ENCODE measurements at regions of chr21 and their contacts with region 1.

Region 1: DNA sequence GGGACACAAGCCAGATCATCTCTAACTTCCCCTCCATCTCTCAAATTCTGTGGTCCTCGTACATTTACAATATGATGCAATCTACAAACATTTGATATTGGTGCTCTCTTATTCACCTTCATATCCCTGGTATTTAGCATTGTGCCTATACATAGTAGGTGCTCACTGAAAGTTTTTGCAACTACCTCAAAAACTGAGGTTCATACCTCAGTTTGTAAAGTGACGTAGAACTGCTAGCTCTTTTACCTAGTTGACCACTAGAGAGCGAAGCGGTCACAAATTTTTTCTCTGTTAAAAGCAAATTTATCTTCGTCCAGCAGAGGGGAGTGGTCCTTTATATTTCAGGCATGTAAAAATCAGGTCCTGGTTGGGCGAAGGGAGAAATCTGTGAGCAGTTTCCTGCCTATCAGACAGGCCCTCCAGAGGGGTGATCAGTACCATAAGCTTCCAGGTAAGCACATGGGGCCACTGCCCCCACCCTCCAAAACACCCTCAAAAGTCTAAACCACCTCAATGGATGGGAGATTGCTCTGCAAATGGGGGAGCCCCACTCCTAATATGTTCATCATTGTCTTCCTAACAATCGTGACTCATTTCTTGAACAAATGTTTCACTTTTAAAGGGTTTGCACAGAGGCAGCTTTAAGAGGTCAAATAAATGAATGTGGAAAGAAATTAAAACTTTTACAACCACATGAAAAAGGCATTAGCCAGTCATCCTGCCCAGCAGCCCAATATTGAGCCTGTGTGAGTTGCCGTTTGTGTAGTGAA is 10.6 kb upstream of the HLCS start:
- DNase-seq: peak; percentile 74
- ATAC-seq: peak; percentile 81
- H3K4me3 ChIP-seq: no peak overlapping the region
- H3K27ac ChIP-seq: peak overlapping the region; percentile 21; the same call in 1 of the 2 replicates
- H3K4me1 ChIP-seq: peaks cover 7 to 19% of the 10 kb centered on the region in 2 experiments
- H3K27me3 ChIP-seq: no peaks in the 10 kb centered on the region
- CTCF ChIP-seq: peak; percentile 77 to 99 (median 91)
- POLR2A ChIP-seq: no peak
- RAD21 ChIP-seq: peak; percentile 86

Region 2: DNA sequence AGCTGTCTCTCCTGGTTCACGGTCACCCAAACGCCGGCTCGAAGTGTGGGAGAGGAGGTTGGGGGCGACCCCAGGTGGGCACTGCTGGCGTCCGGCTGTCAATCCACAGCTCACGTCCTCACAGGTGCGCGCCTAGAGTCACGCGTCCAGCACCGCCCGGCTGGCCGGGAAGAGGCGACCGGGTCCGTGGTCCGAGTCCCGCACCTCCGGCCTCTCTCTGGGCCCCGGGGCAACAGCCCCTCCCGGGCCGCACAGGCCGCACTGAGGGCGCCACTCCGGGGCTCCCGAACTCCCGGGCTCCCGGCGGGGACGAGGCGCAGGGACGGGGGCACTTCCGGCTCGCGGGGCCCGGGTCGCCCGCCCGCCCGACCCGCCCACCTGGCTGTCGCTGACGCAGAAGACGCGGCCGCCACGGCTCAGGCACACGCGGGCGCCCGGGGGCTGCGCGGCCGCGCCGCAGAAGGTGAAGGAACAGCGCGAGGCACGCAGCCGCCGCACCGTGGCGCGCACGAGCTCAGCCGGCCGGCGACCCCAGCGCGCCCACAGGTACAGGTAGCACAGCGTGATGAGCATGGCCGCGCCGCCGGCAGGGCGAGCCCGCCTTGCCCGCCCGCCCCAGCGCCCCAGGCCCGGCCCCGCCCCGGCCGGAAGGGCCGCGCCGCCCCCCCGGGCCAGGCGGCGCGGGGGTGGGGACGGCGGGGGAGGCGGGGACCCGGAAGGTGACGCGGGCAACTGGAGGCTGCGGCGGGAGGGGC is 10.8 kb before region 1 on chr21 and contains the start of gene HLCS:
- CTCF ChIA-PET with region 1: interaction called, 21 read pairs
- POLR2A ChIA-PET with region 1: interaction called, 7 read pairs
- RAD21 ChIA-PET with region 1: no interaction called
- intact Hi-C with region 1: no loop called
- DNase-seq: no peak
- ATAC-seq: peak; percentile 87
- H3K4me3 ChIP-seq: peak within 1 kb of the TSS; percentile 81 to 82
- H3K27ac ChIP-seq: peak within 1 kb of the TSS; percentile 90
- H3K4me1 ChIP-seq: peaks cover 11 to 18% of the 10 kb centered on the region in 2 experiments
- H3K27me3 ChIP-seq: no peaks in the 10 kb centered on the region
- CTCF ChIP-seq: peak in 1 of 3 experiments; percentile 5; a peak in 1 of 6 replicates
- POLR2A ChIP-seq: peak; percentile 49
- RAD21 ChIP-seq: no peak
- total RNA-seq, gene HLCS: 18.5 TPM

Region 3: DNA sequence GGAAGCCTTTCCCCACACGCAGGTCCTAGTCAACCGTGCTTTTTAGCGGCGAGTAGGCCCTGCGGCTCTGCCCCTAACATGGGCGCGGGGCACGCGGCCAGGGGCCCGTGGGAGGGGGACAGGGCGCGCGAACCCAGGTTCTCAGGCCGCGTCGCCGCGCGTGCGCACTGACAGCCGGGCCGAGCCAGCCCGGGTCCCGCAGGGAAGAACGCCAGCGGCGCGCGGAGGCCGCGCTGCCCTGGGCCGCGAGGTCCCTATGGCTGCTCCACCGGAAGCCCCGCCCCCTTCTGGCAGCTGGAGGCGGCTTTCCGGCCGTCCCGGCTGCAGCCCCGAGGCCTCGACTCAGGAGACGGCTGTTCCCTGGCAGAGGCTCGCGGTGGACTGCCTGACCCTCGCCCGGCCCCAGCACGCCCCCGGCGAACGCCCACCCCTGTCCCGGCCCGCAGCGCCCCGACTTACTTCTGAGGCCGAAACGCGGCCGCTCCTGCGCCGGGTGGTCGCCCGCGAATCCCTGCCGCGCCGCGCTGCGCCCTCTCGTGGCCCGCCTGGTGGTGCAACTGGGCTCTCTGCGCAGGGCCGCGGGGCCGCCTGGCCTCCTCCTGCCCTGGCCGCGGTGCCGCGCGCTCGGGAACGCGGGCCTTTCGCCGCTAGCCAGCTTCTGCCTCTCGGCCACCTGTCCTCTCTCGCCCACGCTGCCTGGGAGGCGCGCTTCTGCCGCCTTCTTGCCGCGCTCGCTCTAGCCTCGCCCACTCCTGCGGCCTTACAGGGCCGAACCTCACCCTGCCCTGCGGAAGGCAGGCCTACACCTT is 12.8 kb after region 1 on chr21:
- CTCF ChIA-PET with region 1: interaction called, 15 read pairs
- POLR2A ChIA-PET with region 1: interaction called, 7 read pairs
- RAD21 ChIA-PET with region 1: interaction called in 1 of 2 experiments, 4 read pairs
- intact Hi-C with region 1: no loop called
- DNase-seq: peak; percentile 81
- ATAC-seq: peak; percentile 94
- H3K4me3 ChIP-seq: peak overlapping the region; percentile 46 to 57
- H3K27ac ChIP-seq: peak overlapping the region; percentile 83
- H3K4me1 ChIP-seq: peaks cover 11 to 25% of the 10 kb centered on the region in 2 experiments
- H3K27me3 ChIP-seq: no peaks in the 10 kb centered on the region
- CTCF ChIP-seq: peak in 2 of 3 experiments; percentile 44 to 69; a peak in 4 of 6 replicates
- POLR2A ChIP-seq: peak; percentile 30
- RAD21 ChIP-seq: no peak

Region 4: GRCh38 chr21:37009740-37010341 is 32.8 kb after region 1 on chr21:
- CTCF ChIA-PET with region 1: interaction called, 13 read pairs
- POLR2A ChIA-PET with region 1: no interaction called
- RAD21 ChIA-PET with region 1: interaction called, 3 to 4 read pairs
- intact Hi-C with region 1: no loop called
- DNase-seq: peak; percentile 81
- ATAC-seq: peak; percentile 99
- H3K4me3 ChIP-seq: peak overlapping the region; percentile 38 to 63
- H3K27ac ChIP-seq: no peak overlapping the region
- H3K4me1 ChIP-seq: peaks cover 4 to 12% of the 10 kb centered on the region in 2 experiments; a peak in 3 of 4 replicates
- H3K27me3 ChIP-seq: no peaks in the 10 kb centered on the region
- CTCF ChIP-seq: peak; percentile 83 to 87 (median 85)
- POLR2A ChIP-seq: no peak
- RAD21 ChIP-seq: peak; percentile 68

Region 5: GRCh38 chr21:37087188-37087587 is 110.1 kb after region 1 on chr21:
- CTCF ChIA-PET with region 1: interaction called, 10 read pairs
- POLR2A ChIA-PET with region 1: no interaction called
- RAD21 ChIA-PET with region 1: no interaction called
- intact Hi-C with region 1: loop called (anchors 2 kb)
- DNase-seq: peak; percentile 29
- ATAC-seq: peak; percentile 79
- H3K4me3 ChIP-seq: no peak overlapping the region
- H3K27ac ChIP-seq: 0 out of 2 replicates have a peak overlapping the region, but pooled peaks have one; percentile 1
- H3K4me1 ChIP-seq: peaks cover 3 to 9% of the 10 kb centered on the region in 2 experiments; a peak in 2 of 4 replicates
- H3K27me3 ChIP-seq: no peaks in the 10 kb centered on the region
- CTCF ChIP-seq: peak; percentile 46 to 65 (median 49); a peak in 5 of 6 replicates
- POLR2A ChIP-seq: no peak
- RAD21 ChIP-seq: peak; percentile 49